ENCODE measurements at regions of chr11 and their contacts with region 1.

Region 1: GRCh38 chr11:71425855-71426254 is 22.3 kb downstream of the DHCR7 start:
- DNase-seq: peak; percentile 73
- H3K4me3 ChIP-seq: no peak overlapping the region
- H3K27ac ChIP-seq: peak overlapping the region; percentile 25
- H3K4me1 ChIP-seq: peaks cover 40% of the 10 kb centered on the region
- CTCF ChIP-seq: no peak

Region 2: GRCh38 chr11:71179898-71180605 is 245.8 kb before region 1 on chr11:
- CTCF ChIA-PET with region 1: no interaction called
- POLR2A ChIA-PET with region 1: no interaction called
- intact Hi-C with region 1: no loop called
- DNase-seq: no peak
- H3K4me3 ChIP-seq: no peak overlapping the region
- H3K27ac ChIP-seq: no peak overlapping the region
- H3K4me1 ChIP-seq: no peaks in the 10 kb centered on the region
- CTCF ChIP-seq: no peak

Region 3: DNA sequence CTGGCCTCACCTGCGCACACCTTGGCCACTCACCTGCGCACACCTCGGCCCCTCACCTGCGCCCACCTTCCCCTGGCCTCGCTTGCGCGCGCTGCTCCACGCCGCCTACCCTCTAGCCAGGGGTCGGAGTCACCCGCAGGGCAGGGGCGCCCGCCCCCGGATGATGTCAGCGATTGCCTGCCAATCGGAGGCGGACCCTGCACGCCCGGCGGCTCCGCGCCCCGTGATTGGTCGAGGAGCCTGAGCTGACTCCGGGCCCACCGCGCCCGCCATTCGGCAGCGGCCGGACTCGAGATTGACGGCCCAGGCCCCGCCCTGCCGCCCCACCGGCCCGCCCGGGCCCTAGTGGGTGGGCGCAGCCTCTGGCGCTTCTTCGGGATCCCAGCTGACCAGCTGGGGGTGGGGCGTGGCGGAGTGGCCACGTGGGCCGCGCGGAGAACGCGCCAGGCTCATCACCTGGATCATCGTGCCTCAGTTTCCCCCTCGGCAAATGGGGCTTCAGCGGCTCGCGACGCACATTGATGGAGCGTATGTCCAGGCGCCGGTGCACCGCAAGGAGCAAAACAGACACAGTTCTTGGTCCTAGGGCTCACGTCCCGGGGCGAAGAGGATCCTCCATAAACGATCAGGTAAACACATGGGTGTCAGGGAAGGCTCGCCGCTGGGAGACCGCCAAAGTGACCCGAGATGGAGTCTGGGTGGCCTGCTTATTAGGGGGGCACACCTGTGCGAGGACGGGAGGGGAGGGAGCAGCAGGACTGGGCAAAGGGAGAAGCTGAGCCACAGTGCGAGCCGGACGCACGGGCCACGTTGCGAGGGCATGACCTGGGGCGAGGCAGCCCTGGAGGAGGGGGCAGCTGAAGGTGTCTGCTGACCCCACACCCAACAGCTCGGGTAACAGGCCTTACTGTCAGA is 22.7 kb after region 1 on chr11 and contains the start of gene DHCR7:
- CTCF ChIA-PET with region 1: interaction called, 4 read pairs
- POLR2A ChIA-PET with region 1: interaction called, 5 read pairs
- intact Hi-C with region 1: loop called (anchors 2 kb)
- DNase-seq: peak; percentile 97
- H3K4me3 ChIP-seq: peak within 1 kb of the TSS; percentile 91
- H3K27ac ChIP-seq: peak within 1 kb of the TSS; percentile 38
- H3K4me1 ChIP-seq: peaks cover 40% of the 10 kb centered on the region
- CTCF ChIP-seq: no peak
- total RNA-seq, gene DHCR7: 25.8 and 33.4 TPM in 2 replicates

Region 4: GRCh38 chr11:71472357-71472893 is 46.6 kb after region 1 on chr11:
- CTCF ChIA-PET with region 1: no interaction called
- POLR2A ChIA-PET with region 1: no interaction called
- intact Hi-C with region 1: no loop called
- DNase-seq: no peak
- H3K4me3 ChIP-seq: no peak overlapping the region
- H3K27ac ChIP-seq: no peak overlapping the region
- H3K4me1 ChIP-seq: no peaks in the 10 kb centered on the region
- CTCF ChIP-seq: no peak

Measured in OCI-LY7 (cell line).